ENCODE measurements at regions of chr14 and their contacts with region 1.

Region 1: DNA sequence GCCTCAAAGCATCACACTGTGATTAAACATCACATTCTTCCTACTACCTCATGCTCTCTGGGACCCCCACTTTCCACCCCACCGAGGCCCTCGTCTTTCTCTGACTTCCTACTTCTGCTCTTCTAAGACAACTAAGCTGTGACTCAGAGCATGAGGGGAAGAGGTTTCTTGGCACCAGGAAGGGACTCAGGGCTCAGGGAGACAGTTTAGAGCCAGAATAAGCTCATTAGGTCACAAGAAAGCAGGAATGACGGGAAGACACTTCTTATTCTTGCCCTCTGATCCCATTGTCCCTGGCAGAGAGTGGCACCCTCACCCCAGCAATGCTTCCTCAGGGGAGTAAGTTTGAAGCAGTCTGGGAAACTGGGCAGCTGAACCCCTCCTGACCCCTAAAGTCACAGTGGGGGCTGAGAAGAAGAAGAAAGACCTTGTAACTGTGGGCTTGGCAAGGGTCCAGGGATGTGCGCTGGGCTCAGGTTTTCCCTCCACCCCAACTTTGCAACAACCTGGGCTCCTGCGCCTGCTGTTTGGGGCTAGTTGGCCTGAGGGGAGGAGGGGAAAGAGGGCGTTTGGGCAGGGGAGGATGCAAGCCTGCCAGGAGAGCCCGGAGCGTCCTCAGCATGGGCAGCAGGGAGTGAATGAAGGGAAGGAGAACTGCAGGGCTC is 64.6 kb upstream of the ACTN1 start:
- DNase-seq: no peak
- H3K4me3 ChIP-seq: no peak overlapping the region
- H3K27ac ChIP-seq: peak overlapping the region; percentile 18 to 38
- H3K4me1 ChIP-seq: no peaks in the 10 kb centered on the region
- H3K27me3 ChIP-seq: no peaks in the 10 kb centered on the region
- CTCF ChIP-seq: no peak
- POLR2A ChIP-seq: no peak

Region 2: GRCh38 chr14:68961781-68962584 is 81.7 kb before region 1 on chr14:
- intact Hi-C with region 1: no loop called
- DNase-seq: no peak
- H3K4me3 ChIP-seq: no peak overlapping the region
- H3K27ac ChIP-seq: peak overlapping the region in 1 of 2 donors; percentile 29
- H3K4me1 ChIP-seq: peaks cover 8% of the 10 kb centered on the region
- H3K27me3 ChIP-seq: no peaks in the 10 kb centered on the region
- CTCF ChIP-seq: no peak
- POLR2A ChIP-seq: no peak

Region 3: DNA sequence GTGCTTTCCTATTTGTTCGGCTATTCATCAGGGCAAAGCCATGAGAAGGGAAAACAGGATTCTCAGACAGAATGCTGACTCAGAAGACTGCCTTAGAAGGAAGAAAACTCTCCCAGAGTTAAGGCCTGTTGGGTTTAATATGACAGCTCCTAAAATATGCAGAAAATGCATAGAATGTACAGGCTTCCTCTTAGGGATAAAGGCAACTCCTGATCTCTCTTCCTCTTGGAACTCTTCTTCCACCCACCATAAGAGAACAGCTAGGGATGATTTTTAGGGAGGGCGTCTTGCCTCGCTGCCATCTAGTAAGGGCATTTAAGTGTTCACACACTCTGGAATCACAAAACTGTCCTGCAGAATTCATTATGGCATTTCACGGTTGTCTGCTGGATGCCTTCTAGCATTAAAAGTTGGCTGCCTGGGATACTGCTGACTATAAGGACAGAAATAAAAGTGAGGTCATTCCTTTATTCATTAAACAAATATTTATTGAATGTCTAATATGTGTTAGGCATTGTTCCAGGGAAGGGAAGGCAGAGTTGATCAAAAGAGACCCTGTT is 35.5 kb after region 1 on chr14:
- intact Hi-C with region 1: loop called (anchors 2 kb)
- DNase-seq: no peak
- H3K4me3 ChIP-seq: no peak overlapping the region
- H3K27ac ChIP-seq: peak overlapping the region; percentile 53 to 64
- H3K4me1 ChIP-seq: peaks cover 6% of the 10 kb centered on the region
- H3K27me3 ChIP-seq: no peaks in the 10 kb centered on the region
- CTCF ChIP-seq: no peak
- POLR2A ChIP-seq: no peak

Region 4: DNA sequence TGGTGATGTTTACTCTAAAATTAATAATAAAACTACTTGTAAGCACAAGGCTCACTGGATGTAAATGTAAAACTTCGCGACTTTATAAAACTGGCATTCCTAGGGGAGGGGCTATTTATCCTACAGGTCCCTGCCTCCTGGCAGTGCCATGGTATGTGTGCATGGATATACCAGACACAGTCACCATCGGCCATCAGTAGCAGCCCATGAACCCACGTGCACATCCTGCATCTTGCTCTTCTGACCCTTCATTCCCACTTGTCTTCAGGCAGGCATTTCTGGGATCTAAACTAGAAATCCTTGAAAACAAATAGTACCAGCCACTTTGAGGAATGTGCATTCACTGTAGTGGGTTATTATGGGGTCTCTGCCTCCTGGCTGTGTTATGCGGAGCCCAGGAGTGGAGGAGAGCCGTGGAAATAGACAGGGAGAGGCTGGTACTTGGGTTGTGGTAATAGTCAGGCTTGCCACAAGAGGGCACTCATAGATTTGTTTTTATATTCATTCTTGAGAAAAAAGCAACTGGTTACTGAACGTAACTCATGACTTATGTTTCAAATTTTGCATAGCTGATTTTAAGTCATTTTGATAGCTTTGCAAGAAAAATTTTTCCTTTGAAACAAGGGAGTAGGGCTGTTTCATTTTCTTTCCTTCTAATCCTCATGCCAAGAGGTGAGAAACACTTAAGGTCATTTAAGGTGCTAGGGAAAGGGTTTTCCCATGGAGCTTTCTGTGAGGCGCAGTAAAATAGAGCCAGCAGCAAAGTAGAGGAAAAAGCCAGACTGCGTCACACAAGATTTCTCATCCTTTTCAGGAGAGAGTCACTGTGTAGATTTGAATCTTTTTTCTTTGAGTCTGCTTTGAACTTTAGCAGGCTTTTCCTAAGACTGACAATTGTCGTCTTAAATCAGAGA is 198.8 kb after region 1 on chr14:
- intact Hi-C with region 1: no loop called
- DNase-seq: peak; percentile 62
- H3K4me3 ChIP-seq: no peak overlapping the region
- H3K27ac ChIP-seq: no peak overlapping the region
- H3K4me1 ChIP-seq: no peaks in the 10 kb centered on the region
- H3K27me3 ChIP-seq: no peaks in the 10 kb centered on the region
- CTCF ChIP-seq: peak; percentile 63 to 82 (median 76)
- POLR2A ChIP-seq: no peak